CD8-positive, alpha-beta T cell (primary cell): ENCODE measurements at regions of chr1 and their contacts with region 1.

Region 1: DNA sequence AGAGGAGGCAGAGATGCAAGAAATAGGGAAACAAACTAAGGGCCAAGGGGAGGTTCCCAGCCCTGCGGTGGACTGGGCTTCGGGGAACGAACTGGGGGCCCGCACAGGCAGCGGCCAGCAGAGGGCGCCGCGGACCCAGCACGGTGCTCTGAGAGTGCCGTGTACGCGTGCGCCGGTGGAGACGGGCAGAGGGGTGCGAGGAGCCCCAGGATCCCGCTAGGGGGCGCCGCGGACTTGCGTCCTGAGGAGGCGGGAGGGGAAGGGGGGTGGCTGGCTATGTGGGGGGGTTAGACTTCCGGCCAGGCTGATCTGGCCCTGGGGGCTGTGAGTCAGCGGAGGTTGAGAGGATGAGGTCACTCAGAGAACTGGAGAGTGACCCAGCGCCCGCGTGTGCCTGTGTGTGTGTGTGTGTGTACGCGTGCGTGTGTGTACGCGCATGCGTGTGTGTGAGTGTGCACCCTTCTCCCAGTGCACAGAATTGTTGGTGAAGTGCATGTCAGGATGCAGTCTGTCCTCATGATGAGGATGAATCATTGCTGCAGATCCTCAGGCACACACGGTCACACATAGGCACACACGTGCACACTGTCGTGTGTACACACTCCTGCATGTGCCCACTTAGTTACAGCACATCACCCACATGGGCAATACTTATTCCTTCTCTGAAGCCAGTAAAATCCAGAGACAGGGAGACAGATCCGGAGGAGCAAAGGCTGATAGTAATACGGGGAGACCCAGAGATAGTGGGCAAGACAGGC is 17.0 kb downstream of the NES start:
- DNase-seq: peak; percentile 74 to 94 (median 92)
- ATAC-seq: peak; percentile 91
- H3K4me3 ChIP-seq: no peak overlapping the region
- H3K4me3 Mint-ChIP-seq: peak overlapping the region; percentile 45
- H3K27ac ChIP-seq: peak overlapping the region in 1 of 2 experiments; percentile 47
- H3K27ac Mint-ChIP-seq: no peak overlapping the region
- H3K4me1 ChIP-seq: peaks cover 44% of the 10 kb centered on the region
- H3K4me1 Mint-ChIP-seq: peaks cover 44% of the 10 kb centered on the region
- H3K27me3 ChIP-seq: peaks cover 12 to 14% of the 10 kb centered on the region in 2 experiments
- H3K27me3 Mint-ChIP-seq: peaks cover 20% of the 10 kb centered on the region
- CTCF ChIP-seq: peak; percentile 95

Region 2: DNA sequence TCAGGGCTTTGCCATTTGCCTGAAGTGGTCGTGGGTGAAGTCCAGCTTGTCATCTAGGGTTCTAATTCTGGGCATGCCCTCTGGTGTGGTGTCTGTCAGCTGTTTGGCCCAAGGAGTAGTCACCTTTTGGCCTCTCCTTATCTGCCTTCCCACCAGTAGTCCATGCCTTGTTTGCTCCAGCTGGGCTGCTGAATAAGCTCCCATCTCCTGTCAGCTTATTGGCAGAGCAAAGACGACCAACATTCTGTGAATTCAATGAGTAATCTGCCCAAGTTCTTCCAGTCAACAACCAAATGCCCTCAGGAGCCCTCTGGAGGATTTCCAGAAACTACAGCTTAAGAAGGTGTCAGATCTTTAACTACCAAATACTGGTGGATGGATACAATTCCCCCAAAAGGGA is 11.2 kb before region 1 on chr1:
- CTCF ChIA-PET with region 1: interaction called, 15 read pairs
- POLR2A ChIA-PET with region 1: no interaction called
- intact Hi-C with region 1: no loop called
- DNase-seq: no peak
- ATAC-seq: no peak
- H3K4me3 ChIP-seq: no peak overlapping the region
- H3K4me3 Mint-ChIP-seq: no peak overlapping the region
- H3K27ac ChIP-seq: no peak overlapping the region
- H3K27ac Mint-ChIP-seq: no peak overlapping the region
- H3K4me1 ChIP-seq: peaks cover 1% of the 10 kb centered on the region
- H3K4me1 Mint-ChIP-seq: peaks cover 4% of the 10 kb centered on the region
- H3K27me3 ChIP-seq: peaks cover 15 to 24% of the 10 kb centered on the region in 2 experiments
- H3K27me3 Mint-ChIP-seq: peaks cover 69% of the 10 kb centered on the region
- CTCF ChIP-seq: no peak

Region 3: GRCh38 chr1:156705918-156706656 is 45.9 kb after region 1 on chr1:
- CTCF ChIA-PET with region 1: interaction called, 12 read pairs
- POLR2A ChIA-PET with region 1: no interaction called
- intact Hi-C with region 1: loop called in 1 of 2 experiments (anchors 1 kb)
- DNase-seq: peak; percentile 36 to 81 (median 68)
- ATAC-seq: peak; percentile 66
- H3K4me3 ChIP-seq: peak overlapping the region; percentile 52 to 89
- H3K4me3 Mint-ChIP-seq: peak overlapping the region; percentile 89
- H3K27ac ChIP-seq: peak overlapping the region; percentile 43 to 47
- H3K27ac Mint-ChIP-seq: peak overlapping the region; percentile 73
- H3K4me1 ChIP-seq: peaks cover 35% of the 10 kb centered on the region
- H3K4me1 Mint-ChIP-seq: peaks cover 32% of the 10 kb centered on the region
- H3K27me3 ChIP-seq: peaks cover 8 to 24% of the 10 kb centered on the region in 2 experiments
- H3K27me3 Mint-ChIP-seq: peaks cover 9% of the 10 kb centered on the region
- CTCF ChIP-seq: peak; percentile 82